CD8-positive, alpha-beta T cell (primary cell): ENCODE measurements at regions of chr11 and their contacts with region 1.

Region 1: GRCh38 chr11:77047007-77047927 is 13.1 kb downstream of the B3GNT6 start:
- DNase-seq: peak; percentile 55 to 97 (median 80)
- ATAC-seq: peak; percentile 89
- H3K4me3 ChIP-seq: peak overlapping the region; percentile 41 to 58
- H3K4me3 Mint-ChIP-seq: peak overlapping the region; percentile 74
- H3K27ac ChIP-seq: peak overlapping the region; percentile 45 to 46
- H3K27ac Mint-ChIP-seq: peak overlapping the region; percentile 50
- H3K4me1 ChIP-seq: peaks cover 16% of the 10 kb centered on the region
- H3K4me1 Mint-ChIP-seq: peaks cover 15% of the 10 kb centered on the region
- H3K27me3 ChIP-seq: peaks cover 0 to 3% of the 10 kb centered on the region in 2 experiments
- H3K27me3 Mint-ChIP-seq: peaks cover 11% of the 10 kb centered on the region
- CTCF ChIP-seq: peak; percentile 75

Region 2: DNA sequence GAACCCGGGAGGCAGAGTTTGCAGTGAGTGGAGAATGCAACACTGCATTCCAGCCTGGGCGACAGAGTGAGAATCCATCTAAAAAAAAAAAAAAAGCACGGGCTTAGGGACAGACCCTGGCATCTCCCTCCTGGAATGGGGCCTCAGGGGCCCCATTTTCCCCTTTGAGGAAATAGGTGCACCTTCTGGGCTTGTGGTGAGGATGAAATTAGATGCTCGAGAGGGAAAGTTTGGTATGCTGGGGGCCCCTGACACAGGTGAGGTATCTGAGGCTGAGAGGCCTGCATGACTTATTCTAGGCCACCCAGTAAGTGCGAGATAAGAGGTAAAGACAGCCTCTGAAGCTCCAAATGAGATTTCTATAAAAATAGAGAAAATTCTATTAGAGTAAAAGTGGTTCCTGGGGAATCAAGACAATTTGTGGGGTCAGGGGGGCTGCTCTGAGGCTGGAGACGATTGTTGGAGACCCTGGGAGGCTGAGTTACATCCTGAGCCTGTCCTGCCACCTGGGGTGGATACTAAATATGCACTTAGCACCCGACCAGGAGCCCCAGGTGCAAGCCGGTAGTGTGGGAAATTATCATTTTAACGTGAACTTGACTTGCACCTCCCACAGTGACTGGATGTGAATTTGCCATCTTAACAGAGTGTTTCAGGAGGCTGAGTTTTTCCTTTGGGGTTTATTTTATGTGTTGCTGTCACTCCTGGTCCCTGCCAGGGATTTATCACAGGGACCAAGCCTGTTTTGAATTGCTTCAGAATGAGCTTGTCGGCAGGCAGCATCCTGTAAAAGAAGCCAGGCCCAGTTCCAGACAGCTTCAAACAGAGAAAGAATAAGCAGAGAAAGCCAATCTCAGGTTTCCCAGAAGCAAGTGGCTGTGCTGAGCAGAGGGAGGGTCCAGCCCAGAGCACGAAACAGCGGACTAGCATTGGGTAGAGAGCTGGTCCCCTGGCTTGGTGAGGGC is 312.5 kb before region 1 on chr11:
- CTCF ChIA-PET with region 1: interaction called, 3 read pairs
- POLR2A ChIA-PET with region 1: no interaction called
- intact Hi-C with region 1: loop called (anchors 2 to 10 kb)
- DNase-seq: no peak
- ATAC-seq: no peak
- H3K4me3 ChIP-seq: no peak overlapping the region
- H3K4me3 Mint-ChIP-seq: no peak overlapping the region
- H3K27ac ChIP-seq: no peak overlapping the region
- H3K27ac Mint-ChIP-seq: no peak overlapping the region
- H3K4me1 ChIP-seq: no peaks in the 10 kb centered on the region
- H3K4me1 Mint-ChIP-seq: no peaks in the 10 kb centered on the region
- H3K27me3 ChIP-seq: no peaks in the 10 kb centered on the region
- H3K27me3 Mint-ChIP-seq: peaks cover 4% of the 10 kb centered on the region
- CTCF ChIP-seq: no peak

Region 3: GRCh38 chr11:76860539-76861475 is 186.5 kb before region 1 on chr11 and contains the start of gene ACER3:
- CTCF ChIA-PET with region 1: no interaction called
- POLR2A ChIA-PET with region 1: no interaction called
- intact Hi-C with region 1: loop called in 1 of 2 experiments (anchors 1 kb)
- DNase-seq: peak; percentile 38 to 92 (median 76)
- ATAC-seq: peak; percentile 96
- H3K4me3 ChIP-seq: peak within 1 kb of the TSS; percentile 63 to 82
- H3K4me3 Mint-ChIP-seq: peak within 1 kb of the TSS; percentile 90
- H3K27ac ChIP-seq: peak within 1 kb of the TSS; percentile 37 to 60
- H3K27ac Mint-ChIP-seq: peak within 1 kb of the TSS; percentile 87
- H3K4me1 ChIP-seq: peaks cover 21% of the 10 kb centered on the region
- H3K4me1 Mint-ChIP-seq: peaks cover 31% of the 10 kb centered on the region
- H3K27me3 ChIP-seq: no peaks in the 10 kb centered on the region
- H3K27me3 Mint-ChIP-seq: no peaks in the 10 kb centered on the region
- CTCF ChIP-seq: no peak
- total RNA-seq, gene ACER3: 5.0 to 5.8 TPM

Region 4: GRCh38 chr11:77082838-77083562 is 35.7 kb after region 1 on chr11:
- CTCF ChIA-PET with region 1: interaction called, 6 read pairs
- POLR2A ChIA-PET with region 1: interaction called, 4 read pairs
- intact Hi-C with region 1: loop called in 1 of 2 experiments (anchors 2 kb)
- DNase-seq: peak in 8 of 9 experiments; percentile 38 to 76 (median 57)
- ATAC-seq: peak; percentile 93
- H3K4me3 ChIP-seq: peak overlapping the region; percentile 13 to 48
- H3K4me3 Mint-ChIP-seq: peak overlapping the region; percentile 75
- H3K27ac ChIP-seq: peak overlapping the region; percentile 73 to 81
- H3K27ac Mint-ChIP-seq: peak overlapping the region; percentile 97
- H3K4me1 ChIP-seq: peaks cover 25% of the 10 kb centered on the region
- H3K4me1 Mint-ChIP-seq: peaks cover 27% of the 10 kb centered on the region
- H3K27me3 ChIP-seq: no peaks in the 10 kb centered on the region
- H3K27me3 Mint-ChIP-seq: no peaks in the 10 kb centered on the region
- CTCF ChIP-seq: no peak

Region 5: DNA sequence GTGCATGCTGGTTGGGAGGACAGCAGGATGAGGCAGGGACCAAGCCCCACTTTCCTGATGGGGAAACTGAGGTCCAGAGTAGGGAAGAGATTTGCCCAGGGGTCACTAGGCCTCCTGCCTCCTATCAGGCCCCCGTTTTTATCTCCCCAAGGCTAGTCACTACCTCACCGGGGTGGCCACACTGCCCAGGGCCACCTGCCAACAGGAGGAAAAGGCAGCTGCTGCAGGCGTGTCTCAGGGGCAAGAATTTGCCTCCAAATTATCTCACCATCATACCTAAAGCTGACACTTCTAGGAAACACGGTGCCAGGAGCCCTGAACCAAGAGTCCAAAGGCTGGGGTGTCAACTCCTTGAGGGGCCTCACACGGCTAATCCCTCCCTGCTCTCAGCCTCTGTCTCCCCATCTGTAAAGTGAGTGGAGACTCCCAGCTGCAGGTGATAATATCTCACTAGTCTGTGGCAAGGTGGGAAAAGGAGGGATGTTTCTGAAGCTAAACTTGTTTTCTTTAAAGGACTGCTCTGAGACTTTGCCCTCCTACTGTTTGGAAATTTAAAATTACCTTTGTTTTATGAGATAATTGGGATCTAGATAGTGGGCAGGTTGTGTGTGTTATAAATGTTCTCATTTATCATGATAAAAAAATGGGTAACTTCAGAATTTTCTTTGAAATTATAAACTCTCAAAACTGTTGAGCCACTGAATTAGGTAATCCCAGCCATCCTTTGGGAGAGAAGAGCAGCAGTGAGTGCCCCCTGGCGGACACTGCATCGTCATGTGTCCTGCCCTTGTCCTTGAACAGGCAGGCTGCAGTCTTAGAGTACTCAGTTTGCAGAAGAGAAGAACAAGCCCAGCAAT is 140.7 kb after region 1 on chr11:
- CTCF ChIA-PET with region 1: interaction called, 6 read pairs
- POLR2A ChIA-PET with region 1: no interaction called
- intact Hi-C with region 1: loop called (anchors 1 to 2 kb)
- DNase-seq: peak; percentile 30 to 81 (median 72)
- ATAC-seq: peak; percentile 71
- H3K4me3 ChIP-seq: no peak overlapping the region
- H3K4me3 Mint-ChIP-seq: no peak overlapping the region
- H3K27ac ChIP-seq: no peak overlapping the region
- H3K27ac Mint-ChIP-seq: no peak overlapping the region
- H3K4me1 ChIP-seq: no peaks in the 10 kb centered on the region
- H3K4me1 Mint-ChIP-seq: no peaks in the 10 kb centered on the region
- H3K27me3 ChIP-seq: no peaks in the 10 kb centered on the region
- H3K27me3 Mint-ChIP-seq: no peaks in the 10 kb centered on the region
- CTCF ChIP-seq: peak; percentile 71

Region 6: GRCh38 chr11:77340501-77340900 is 293.2 kb after region 1 on chr11:
- CTCF ChIA-PET with region 1: no interaction called
- POLR2A ChIA-PET with region 1: no interaction called
- intact Hi-C with region 1: no loop called
- DNase-seq: no peak
- ATAC-seq: no peak
- H3K4me3 ChIP-seq: no peak overlapping the region
- H3K4me3 Mint-ChIP-seq: no peak overlapping the region
- H3K27ac ChIP-seq: no peak overlapping the region
- H3K27ac Mint-ChIP-seq: no peak overlapping the region
- H3K4me1 ChIP-seq: no peaks in the 10 kb centered on the region
- H3K4me1 Mint-ChIP-seq: no peaks in the 10 kb centered on the region
- H3K27me3 ChIP-seq: no peaks in the 10 kb centered on the region
- H3K27me3 Mint-ChIP-seq: no peaks in the 10 kb centered on the region
- CTCF ChIP-seq: no peak

Region 7: DNA sequence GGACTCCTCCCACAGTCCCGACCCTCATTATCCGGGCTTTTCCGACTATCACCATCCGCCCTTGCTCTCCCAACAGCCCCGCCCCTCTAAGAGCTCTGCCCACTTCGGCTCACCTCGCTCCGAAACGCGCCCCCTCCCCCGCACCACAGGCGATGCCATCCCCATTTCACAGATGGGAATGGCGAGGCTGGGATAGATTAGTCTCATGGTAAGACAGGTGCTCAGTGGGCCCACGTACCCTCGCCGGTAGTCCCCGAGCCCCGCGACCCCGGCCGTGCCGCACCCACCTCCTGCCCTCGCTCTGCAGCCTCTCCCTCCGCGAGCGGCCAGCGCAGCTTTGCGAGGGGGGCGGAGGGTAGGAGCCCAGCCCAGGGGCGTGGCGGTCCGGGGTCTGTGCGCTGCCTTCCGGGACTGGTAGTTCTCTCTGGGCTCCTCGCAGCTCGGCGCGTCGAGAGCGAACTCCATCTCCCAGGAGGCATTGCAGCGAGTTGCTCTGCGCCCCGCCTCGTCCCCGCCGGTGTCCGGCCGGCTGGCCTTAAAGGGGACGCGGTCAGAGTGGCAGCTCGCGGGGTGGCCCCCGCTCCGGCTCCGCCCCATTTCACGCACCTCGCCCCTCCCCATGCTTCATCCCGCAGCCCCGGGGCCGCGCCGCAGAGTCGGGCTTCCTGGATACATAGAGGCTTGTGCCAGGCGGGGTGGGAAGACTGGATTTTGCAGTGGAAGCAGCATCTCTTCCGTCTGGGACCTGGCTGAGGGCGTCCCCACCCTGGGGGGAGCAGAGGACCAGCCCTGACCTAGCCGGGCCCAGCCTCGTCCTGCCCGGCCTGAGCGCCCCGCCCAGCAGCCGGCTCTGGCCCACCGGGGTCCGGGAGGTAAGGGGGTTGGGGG is 1141.3 kb after region 1 on chr11 and contains the starts of genes KCTD21 and USP35:
- CTCF ChIA-PET with region 1: no interaction called
- POLR2A ChIA-PET with region 1: no interaction called
- intact Hi-C with region 1: loop called in 1 of 2 experiments (anchors 5 kb)
- DNase-seq: peak; percentile 78 to 95 (median 91)
- ATAC-seq: peak; percentile 79
- H3K4me3 ChIP-seq: peak within 1 kb of the TSS; percentile 90 to 100
- H3K4me3 Mint-ChIP-seq: peak within 1 kb of the TSS; percentile 97
- H3K27ac ChIP-seq: peak within 1 kb of the TSS; percentile 73 to 75
- H3K27ac Mint-ChIP-seq: peak within 1 kb of the TSS; percentile 98
- H3K4me1 ChIP-seq: peaks cover 37% of the 10 kb centered on the region
- H3K4me1 Mint-ChIP-seq: peaks cover 55% of the 10 kb centered on the region
- H3K27me3 ChIP-seq: no peaks in the 10 kb centered on the region
- H3K27me3 Mint-ChIP-seq: no peaks in the 10 kb centered on the region
- CTCF ChIP-seq: no peak
- total RNA-seq, gene KCTD21: 3.0 to 3.4 TPM
- total RNA-seq, gene USP35: 22.3 to 23.4 TPM